Colonic mucosa (tissue), 4 donors: ENCODE measurements at regions of chr15 and their contacts with region 1.

Region 1: GRCh38 chr15:101258238-101259144 is 6.6 kb upstream of the CHSY1 start:
- DNase-seq: peak; percentile 73
- H3K4me3 ChIP-seq: no peak overlapping the region
- H3K27ac ChIP-seq: no peak overlapping the region
- H3K4me1 ChIP-seq: no peaks in the 10 kb centered on the region
- H3K27me3 ChIP-seq: no peaks in the 10 kb centered on the region
- CTCF ChIP-seq: peak; percentile 72

Region 2: DNA sequence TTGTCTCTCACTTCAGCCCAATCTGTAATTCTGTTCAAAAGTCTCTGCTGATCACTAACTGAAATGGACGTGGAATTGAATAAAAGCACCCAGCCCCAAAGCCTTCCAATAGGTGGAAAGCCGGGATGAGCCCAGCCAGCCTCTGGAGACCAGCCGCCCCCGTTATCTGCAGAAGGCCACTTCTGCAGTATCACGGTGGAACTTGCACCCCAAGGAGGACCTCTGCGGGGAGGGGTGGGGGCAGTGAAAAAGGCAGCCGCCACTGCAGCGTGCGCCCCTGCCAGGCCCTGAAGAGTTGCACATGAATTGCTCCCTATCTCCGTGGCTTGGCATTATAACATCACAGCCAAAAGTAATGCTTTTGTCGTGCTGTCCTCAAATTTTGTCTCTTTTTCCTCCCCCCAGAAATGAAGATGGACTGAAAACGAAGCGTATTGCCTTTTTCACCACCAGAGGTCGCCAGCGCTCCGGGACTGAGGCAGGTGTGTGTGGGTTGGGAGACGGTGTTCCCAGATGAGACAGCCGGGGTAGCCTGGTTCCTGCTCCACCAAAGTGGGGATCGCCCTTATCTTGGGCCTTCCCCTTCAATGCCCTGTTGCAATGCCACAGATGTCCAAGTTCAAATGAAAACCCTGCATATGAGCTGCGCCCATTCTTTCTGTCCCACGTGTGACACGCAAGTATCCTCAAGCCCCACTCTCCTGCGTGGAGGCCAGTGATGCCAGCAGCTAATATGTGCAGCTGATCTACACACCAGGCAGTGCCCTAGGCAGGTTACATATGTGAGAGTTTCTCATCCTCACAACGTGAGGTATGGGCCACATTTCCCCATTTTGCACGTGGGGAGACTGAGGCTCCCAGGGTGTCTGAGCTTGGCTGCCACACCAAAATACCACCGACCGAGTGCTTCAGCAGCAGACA is 243.3 kb before region 1 on chr15:
- intact Hi-C with region 1: loop called (anchors 1 kb)
- DNase-seq: peak; percentile 75
- H3K4me3 ChIP-seq: no peak overlapping the region
- H3K27ac ChIP-seq: no peak overlapping the region
- H3K4me1 ChIP-seq: no peaks in the 10 kb centered on the region
- H3K27me3 ChIP-seq: no peaks in the 10 kb centered on the region
- CTCF ChIP-seq: peak; percentile 83

Region 3: GRCh38 chr15:101088788-101089583 is 169.5 kb before region 1 on chr15:
- intact Hi-C with region 1: loop called (anchors 2 kb)
- DNase-seq: peak; percentile 76
- H3K4me3 ChIP-seq: peak overlapping the region; percentile 24
- H3K27ac ChIP-seq: no peak overlapping the region
- H3K4me1 ChIP-seq: no peaks in the 10 kb centered on the region
- H3K27me3 ChIP-seq: no peaks in the 10 kb centered on the region
- CTCF ChIP-seq: peak; percentile 100